Motor neuron (in vitro differentiated cells): ENCODE measurements at regions of chr13 and their contacts with region 1.

Region 1: DNA sequence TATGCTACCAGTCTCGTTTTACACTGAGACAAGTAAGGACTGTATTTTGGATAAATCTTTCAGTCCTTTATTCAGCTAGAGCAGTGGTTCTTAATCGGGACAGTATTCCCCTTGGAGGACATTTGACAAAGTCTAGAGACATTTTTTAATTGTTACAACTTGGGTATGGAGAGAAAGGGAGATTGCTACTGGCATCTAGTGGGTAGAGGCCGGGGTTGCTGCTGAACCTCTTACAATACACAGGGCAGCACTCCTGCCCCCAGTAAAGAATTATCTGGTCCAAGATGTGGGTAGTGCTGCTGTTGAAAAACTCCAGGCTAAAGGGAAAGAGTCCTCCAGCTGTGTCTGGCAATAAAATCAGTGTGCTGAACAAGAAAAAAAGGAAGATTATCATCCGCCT is 334.8 kb downstream of the SLC7A1 start:
- ATAC-seq: peak in 3 of 8 experiments; percentile 64 to 79 (median 65)
- H3K4me3 ChIP-seq: no peak overlapping the region
- H3K27ac ChIP-seq: no peak overlapping the region
- H3K4me1 ChIP-seq: no peaks in the 10 kb centered on the region

Region 2: DNA sequence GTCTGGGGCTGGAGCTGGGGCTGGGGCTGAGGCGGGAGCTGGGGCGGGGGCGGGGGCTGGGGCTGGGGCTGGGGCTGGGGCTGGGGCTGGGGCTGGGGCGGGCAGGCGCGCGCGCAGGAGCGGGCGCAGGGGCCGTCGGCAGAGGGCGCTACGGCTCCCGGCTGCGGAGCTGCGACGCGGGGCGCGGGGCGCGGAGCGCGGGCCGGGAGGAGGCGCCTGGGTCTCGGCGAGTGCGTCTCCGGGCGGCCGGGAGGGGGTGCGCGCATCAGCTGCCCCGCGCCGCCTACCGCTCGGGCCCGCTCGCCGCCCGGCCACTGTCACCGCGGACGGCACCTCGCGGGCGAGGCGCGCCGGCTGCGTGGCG is 441.0 kb before region 1 on chr13:
- in situ Hi-C with region 1: loop called in 1 of 9 experiments (anchors 25 kb)
- ATAC-seq: peak; percentile 91 to 97 (median 96)
- H3K4me3 ChIP-seq: peak overlapping the region; percentile 47 to 59 (median 56)
- H3K27ac ChIP-seq: peak overlapping the region; percentile 9 to 25
- H3K4me1 ChIP-seq: no peaks in the 10 kb centered on the region